SK-N-SH (cell line): ENCODE measurements at regions of chr9 and their contacts with region 1.

Region 1: GRCh38 chr9:917730-918129 is 58.7 kb upstream of the DMRT3 start:
- DNase-seq: no peak
- H3K4me3 ChIP-seq: peak overlapping the region in 1 of 2 experiments; percentile 9; a peak in 1 of 4 replicates
- H3K27ac ChIP-seq: no peak overlapping the region
- H3K4me1 ChIP-seq: no peaks in the 10 kb centered on the region
- H3K27me3 ChIP-seq: peaks cover 31% of the 10 kb centered on the region; the same call in 1 of the 2 replicates
- CTCF ChIP-seq: no peak
- EP300 ChIP-seq: no peak
- RAD21 ChIP-seq: no peak

Region 2: DNA sequence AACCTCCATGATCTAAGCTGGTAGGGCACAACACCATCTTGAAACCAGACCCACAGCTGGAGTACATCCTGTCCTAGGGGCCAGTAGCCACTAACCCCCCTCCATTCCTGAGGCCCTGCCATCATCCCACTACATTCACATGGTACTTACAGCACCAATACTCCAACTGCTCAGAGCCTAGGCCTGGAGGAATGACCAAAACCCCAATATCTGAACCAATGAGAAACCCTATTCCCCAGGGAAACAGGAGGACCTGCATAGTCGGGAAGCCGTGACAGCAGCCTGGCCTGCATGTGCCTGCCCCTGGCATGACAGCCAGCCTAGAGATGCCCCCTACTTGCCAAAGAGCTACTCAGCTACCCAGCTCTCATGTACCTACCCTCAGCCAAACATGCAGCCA is 141.6 kb before region 1 on chr9:
- CTCF ChIA-PET with region 1: no interaction called
- POLR2A ChIA-PET with region 1: no interaction called
- DNase-seq: no peak
- H3K4me3 ChIP-seq: no peak overlapping the region
- H3K27ac ChIP-seq: no peak overlapping the region
- H3K4me1 ChIP-seq: no peaks in the 10 kb centered on the region
- H3K27me3 ChIP-seq: peaks cover 27% of the 10 kb centered on the region
- CTCF ChIP-seq: no peak
- EP300 ChIP-seq: no peak
- RAD21 ChIP-seq: no peak

Region 3: DNA sequence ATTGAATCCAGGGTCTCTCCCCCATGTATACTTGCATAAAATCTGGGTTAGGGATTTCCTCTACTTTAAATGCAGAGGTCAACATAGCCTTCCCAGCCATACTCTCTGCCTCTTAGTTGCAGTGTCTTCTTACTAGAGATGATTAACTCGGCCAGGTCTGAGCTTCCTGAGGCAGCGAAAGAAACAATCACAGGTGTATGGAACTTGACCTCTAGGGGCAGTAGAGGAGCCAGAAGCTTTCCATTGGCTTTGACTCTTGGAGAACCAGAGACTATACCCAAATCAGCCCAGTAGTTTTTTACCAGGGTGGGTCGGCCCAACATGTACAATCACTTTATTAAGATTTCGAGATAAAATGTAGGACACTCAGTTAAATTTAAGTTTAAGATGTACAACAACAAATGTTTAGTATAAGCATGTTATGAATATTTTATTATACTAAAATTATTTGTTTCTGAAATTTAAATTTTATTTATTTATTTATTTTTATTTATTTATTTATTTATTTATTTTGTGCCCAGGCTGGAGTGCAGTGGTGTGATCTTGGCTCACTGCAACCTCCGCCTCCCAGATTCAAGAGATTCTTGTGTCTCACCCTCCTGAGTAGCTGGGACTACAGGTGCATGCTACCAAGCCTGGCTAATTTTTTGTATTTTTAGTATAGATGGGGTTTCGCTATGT is 10.8 kb after region 1 on chr9:
- CTCF ChIA-PET with region 1: interaction called, 19 read pairs
- POLR2A ChIA-PET with region 1: no interaction called
- DNase-seq: peak; percentile 27
- H3K4me3 ChIP-seq: peak overlapping the region in 1 of 2 experiments; percentile 38; a peak in 1 of 4 replicates
- H3K27ac ChIP-seq: no peak overlapping the region
- H3K4me1 ChIP-seq: no peaks in the 10 kb centered on the region
- H3K27me3 ChIP-seq: peaks cover 17% of the 10 kb centered on the region; the same call in 1 of the 2 replicates
- CTCF ChIP-seq: peak; percentile 61
- EP300 ChIP-seq: no peak
- RAD21 ChIP-seq: no peak

Region 4: GRCh38 chr9:1522219-1522767 is 604.6 kb after region 1 on chr9:
- CTCF ChIA-PET with region 1: no interaction called
- POLR2A ChIA-PET with region 1: no interaction called
- DNase-seq: no peak
- H3K4me3 ChIP-seq: no peak overlapping the region
- H3K27ac ChIP-seq: no peak overlapping the region
- H3K4me1 ChIP-seq: no peaks in the 10 kb centered on the region
- H3K27me3 ChIP-seq: no peaks in the 10 kb centered on the region
- CTCF ChIP-seq: no peak
- EP300 ChIP-seq: no peak
- RAD21 ChIP-seq: no peak